IMR-90 (cell line): ENCODE measurements at regions of chrX and their contacts with region 1.

Region 1: GRCh38 chrX:99480728-99481127 is 929.3 kb downstream of the PCDH19 start:
- DNase-seq: no peak
- ATAC-seq: no peak
- H3K4me3 ChIP-seq: no peak overlapping the region
- H3K27ac ChIP-seq: no peak overlapping the region
- H3K4me1 ChIP-seq: no peaks in the 10 kb centered on the region
- H3K27me3 ChIP-seq: no peaks in the 10 kb centered on the region
- CTCF ChIP-seq: no peak
- POLR2A ChIP-seq: no peak
- RAD21 ChIP-seq: no peak

Region 2: GRCh38 chrX:99445336-99445735 is 35.4 kb before region 1 on chrX:
- CTCF ChIA-PET with region 1: no interaction called
- POLR2A ChIA-PET with region 1: no interaction called
- dilution Hi-C with region 1: no loop called
- in situ Hi-C with region 1: no loop called
- intact Hi-C with region 1: loop called (anchors 1 kb)
- DNase-seq: no peak
- ATAC-seq: no peak
- H3K4me3 ChIP-seq: no peak overlapping the region
- H3K27ac ChIP-seq: no peak overlapping the region
- H3K4me1 ChIP-seq: no peaks in the 10 kb centered on the region
- H3K27me3 ChIP-seq: no peaks in the 10 kb centered on the region
- CTCF ChIP-seq: no peak
- POLR2A ChIP-seq: no peak
- RAD21 ChIP-seq: no peak